ENCODE measurements at regions of chr18 and their contacts with region 1.

Region 1: DNA sequence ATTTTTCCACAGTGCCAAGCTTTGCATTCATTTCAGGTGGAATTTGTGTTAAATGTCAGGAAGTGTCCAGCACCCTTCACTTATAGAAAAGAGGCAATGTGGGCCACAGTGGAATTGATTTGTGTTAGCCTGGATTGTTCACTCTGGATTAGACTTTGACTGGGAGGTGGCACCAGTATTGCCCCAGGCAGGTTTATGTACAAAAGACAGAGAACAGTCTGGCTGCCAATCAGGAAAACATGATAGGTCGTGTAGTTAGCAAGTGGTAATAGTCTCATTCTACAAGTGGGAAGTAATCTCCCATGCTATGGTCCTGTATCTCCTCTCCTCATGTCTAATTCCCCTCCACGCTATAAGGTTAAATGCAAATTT is 45.6 kb downstream of the RAB27B start:
- DNase-seq: peak in 1 of 3 donors; percentile 21
- H3K4me3 ChIP-seq: no peak overlapping the region
- H3K27ac ChIP-seq: no peak overlapping the region
- H3K4me1 ChIP-seq: peaks cover 17 to 46% (median 37%) of the 10 kb centered on the region in 4 experiments
- H3K27me3 ChIP-seq: no peaks in the 10 kb centered on the region

Region 2: DNA sequence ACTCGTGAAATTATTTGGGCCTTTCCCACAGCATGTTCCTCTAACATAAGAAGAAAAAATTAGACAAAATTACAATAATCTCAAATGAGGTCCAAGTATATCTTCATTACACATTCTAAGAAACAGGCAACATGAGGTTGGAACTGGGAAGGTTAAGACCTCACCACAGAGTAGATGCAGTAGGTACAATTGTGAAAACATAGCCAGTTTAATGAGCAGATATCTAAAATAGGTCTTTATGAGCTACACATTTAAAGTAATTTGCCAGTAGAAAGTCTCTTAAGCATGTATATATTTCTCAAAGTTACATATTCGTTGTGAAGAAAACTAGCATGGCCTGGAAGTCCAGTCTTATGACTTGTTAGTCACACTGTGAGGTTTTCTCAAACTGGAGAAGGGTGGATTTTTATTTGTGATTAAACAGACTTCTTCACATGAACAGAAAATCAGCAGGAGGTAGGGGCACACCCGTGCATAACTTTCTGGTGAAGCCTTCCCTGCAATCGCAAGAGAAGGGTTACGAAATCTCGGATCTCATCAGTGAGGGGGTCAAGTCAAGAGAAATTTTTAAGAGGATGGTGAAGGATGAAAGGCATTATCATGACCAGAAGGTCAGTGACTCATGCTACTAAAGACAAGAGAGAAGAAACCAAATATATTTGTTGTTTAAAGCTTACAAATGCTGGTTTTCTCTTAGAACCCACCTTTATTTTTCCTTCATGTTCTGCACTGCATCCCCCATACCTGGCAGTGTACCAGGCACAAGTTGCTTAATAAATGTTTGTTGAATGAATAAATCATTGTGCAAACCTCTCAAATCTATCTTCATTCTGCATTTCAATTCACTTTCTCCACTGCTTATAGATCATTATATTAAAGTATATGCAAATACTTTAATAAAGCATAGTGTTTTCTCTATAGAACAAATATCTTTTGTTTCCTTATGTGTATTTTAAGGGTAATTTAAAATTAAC is 50.7 kb before region 1 on chr18:
- CTCF ChIA-PET with region 1: no interaction called
- POLR2A ChIA-PET with region 1: no interaction called
- DNase-seq: peak in 1 of 3 donors; percentile 18
- H3K4me3 ChIP-seq: no peak overlapping the region
- H3K27ac ChIP-seq: no peak overlapping the region
- H3K4me1 ChIP-seq: peaks cover 0 to 28% (median 20%) of the 10 kb centered on the region in 4 experiments
- H3K27me3 ChIP-seq: no peaks in the 10 kb centered on the region

Region 3: DNA sequence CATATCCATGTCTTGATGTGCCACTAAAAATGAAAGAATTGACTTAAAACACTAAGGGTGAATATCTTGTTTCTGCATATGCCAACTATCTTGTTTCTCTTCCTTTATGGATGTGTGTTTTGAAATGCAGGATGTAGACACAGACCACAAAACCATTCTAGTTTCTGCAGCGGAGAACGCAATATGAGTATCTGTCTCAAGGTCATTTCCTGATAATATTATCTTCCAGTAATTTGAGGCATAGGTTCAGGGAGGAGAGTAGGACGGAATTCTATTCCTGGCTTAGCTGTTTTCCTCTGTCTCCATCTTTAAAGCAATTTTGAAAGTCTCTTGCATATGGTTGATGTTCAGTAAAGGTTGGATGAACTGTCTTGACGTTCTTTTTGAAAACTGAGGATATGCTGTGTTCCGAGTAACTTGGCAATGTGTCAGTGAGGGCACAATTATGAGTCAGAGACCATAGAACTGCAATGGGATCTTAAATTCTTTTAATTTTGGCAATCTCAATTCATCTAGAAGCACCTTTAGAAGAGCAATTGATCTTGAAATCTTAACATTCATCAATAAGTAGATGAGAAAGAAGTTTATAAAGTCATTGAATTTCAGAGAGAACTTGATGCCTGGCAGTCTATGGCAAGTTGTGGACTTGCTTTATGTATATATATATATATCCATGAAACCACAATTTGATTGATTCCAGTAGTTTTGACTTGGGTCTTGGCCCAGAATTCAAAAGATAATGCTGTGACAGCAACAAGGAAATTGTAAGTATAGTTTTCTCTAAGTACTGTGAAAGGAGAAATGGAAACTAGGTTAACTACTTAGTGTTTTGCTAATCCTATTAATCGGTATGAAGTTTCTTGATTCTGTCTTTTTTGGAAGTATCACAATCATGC is 20.8 kb before region 1 on chr18:
- CTCF ChIA-PET with region 1: interaction called, 34 read pairs
- POLR2A ChIA-PET with region 1: no interaction called
- DNase-seq: peak; percentile 78 to 95 (median 90)
- H3K4me3 ChIP-seq: peak overlapping the region in 5 of 7 experiments; percentile 5 to 48 (median 37)
- H3K27ac ChIP-seq: peak overlapping the region in 1 of 2 experiments; percentile 3
- H3K4me1 ChIP-seq: peaks cover 16 to 55% (median 37%) of the 10 kb centered on the region in 4 experiments
- H3K27me3 ChIP-seq: no peaks in the 10 kb centered on the region

Region 4: DNA sequence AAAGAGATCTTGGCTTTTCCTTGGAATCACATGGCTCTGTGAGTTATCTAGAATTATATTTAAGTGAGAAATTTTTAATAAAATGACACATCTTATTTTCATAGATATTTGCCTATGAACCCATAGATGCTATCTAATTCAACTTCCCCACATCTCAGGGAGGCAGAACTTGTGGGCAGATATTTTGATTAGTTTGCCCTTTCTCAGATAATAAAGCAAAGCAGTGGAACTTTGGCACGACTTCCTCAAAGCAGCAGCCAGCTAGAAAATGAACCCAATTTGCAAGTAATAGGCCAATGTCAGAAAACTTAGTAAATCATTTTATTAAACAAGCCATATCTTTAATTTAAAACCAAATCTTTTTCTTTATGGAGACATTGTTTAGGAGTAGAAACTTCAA is 12.9 kb before region 1 on chr18:
- CTCF ChIA-PET with region 1: interaction called, 34 read pairs
- POLR2A ChIA-PET with region 1: no interaction called
- DNase-seq: peak in 2 of 3 donors; percentile 80 to 88
- H3K4me3 ChIP-seq: no peak overlapping the region
- H3K27ac ChIP-seq: no peak overlapping the region
- H3K4me1 ChIP-seq: peaks cover 11 to 30% (median 21%) of the 10 kb centered on the region in 4 experiments
- H3K27me3 ChIP-seq: no peaks in the 10 kb centered on the region

Region 5: DNA sequence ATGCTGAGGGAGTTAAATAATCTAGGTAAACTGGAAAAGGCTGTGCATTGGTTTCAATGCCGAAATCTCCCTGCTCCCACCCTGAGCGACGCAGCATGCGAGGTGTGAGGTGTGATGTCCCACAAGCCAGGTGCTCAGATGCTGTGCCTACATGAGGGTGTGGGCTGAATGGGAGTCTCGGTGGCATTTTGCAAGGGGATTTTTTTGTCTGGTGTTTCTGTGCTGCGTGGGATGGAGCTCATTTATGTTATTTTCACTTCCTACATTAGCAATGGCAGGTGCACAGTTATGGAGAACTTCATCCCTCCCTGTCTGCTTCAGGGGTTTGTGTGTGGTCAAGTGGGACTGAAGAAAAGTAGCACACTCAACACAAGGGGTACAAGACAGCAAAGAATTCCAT is 195.6 kb after region 1 on chr18:
- CTCF ChIA-PET with region 1: no interaction called
- POLR2A ChIA-PET with region 1: no interaction called
- DNase-seq: no peak
- H3K4me3 ChIP-seq: no peak overlapping the region
- H3K27ac ChIP-seq: no peak overlapping the region
- H3K4me1 ChIP-seq: no peaks in the 10 kb centered on the region
- H3K27me3 ChIP-seq: peaks cover 0 to 4% (median 0%) of the 10 kb centered on the region in 5 experiments